ENCODE measurements at regions of chr14 and their contacts with region 1.

Region 1: DNA sequence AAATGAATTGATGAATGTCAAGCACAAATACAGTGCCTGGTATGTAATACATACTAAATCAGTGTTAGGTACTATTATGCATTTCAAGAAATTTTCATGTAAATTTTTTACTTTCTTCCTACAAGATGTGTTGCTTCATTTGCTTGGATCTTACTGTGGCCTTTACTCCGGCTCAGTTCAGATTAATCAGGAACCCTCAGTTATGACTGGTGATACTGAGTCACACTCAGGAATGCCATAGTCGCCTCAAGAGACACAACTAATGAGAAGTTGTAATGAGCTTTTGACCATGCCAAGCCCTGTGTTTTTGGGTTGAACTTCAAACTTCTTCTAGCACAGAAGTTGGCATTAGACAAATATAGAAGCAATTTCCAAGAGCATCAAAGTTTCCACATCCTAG is 96.0 kb downstream of the TGFB3 start:
- DNase-seq: peak in 1 of 2 donors; percentile 41
- H3K4me3 ChIP-seq: no peak overlapping the region
- CTCF ChIP-seq: no peak
- POLR2A ChIP-seq: no peak

Region 2: GRCh38 chr14:75783184-75783583 is 102.6 kb before region 1 on chr14:
- intact Hi-C with region 1: no loop called
- DNase-seq: no peak
- H3K4me3 ChIP-seq: no peak overlapping the region
- CTCF ChIP-seq: no peak
- POLR2A ChIP-seq: no peak

Region 3: GRCh38 chr14:76576047-76576741 is 690.4 kb after region 1 on chr14:
- intact Hi-C with region 1: loop called (anchors 5 kb)
- DNase-seq: no peak
- H3K4me3 ChIP-seq: no peak overlapping the region
- CTCF ChIP-seq: no peak
- POLR2A ChIP-seq: no peak

Measured in lower leg skin (tissue), 4 donors.